ENCODE measurements at regions of chr14 and their contacts with region 1.

Region 1: DNA sequence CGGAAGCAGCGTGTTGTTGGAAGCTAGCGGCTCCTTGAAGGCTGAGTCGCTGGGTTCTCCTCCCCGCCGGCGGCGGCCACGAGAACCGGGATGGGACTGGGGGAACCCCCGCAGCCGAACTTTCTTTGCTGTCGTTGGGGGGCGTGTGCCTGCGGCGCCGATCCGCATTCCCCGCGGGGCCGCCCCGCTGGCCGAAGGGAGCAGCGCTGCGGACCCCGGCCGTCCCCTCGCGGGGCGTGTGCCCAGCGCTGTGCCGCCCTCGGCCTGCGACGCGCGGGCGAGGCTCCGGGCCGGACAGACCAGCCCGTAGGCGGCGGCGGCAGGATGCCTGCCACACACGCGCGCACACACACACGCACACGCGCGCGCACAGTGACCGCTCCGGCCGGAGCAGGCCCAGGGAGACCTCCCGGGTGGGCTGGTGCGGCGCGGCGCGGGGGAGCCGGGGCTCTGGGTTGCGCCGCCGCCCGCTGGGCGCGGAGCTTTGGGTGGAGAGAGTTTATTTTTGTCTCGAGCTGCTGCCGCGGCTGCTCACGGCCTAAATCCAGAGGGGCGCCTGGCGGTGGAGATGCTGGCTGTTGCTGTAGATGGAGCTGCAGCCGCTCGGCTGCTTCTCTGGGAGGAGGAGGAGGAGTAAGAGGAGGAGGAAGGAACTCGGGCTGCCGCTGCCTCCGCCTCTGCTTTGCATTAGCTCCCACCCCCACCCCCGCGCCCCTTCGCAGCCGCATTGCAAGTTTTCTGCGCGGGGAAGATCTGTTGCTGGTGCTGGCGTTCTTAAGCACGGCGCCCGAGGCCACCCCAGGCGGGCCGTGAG is at the start of gene SAMD4A:
- DNase-seq: peak; percentile 63
- H3K27ac ChIP-seq: peak within 1 kb of the TSS; percentile 94
- CTCF ChIP-seq: peak; percentile 35; the same call in 1 of the 2 replicates

Region 2: DNA sequence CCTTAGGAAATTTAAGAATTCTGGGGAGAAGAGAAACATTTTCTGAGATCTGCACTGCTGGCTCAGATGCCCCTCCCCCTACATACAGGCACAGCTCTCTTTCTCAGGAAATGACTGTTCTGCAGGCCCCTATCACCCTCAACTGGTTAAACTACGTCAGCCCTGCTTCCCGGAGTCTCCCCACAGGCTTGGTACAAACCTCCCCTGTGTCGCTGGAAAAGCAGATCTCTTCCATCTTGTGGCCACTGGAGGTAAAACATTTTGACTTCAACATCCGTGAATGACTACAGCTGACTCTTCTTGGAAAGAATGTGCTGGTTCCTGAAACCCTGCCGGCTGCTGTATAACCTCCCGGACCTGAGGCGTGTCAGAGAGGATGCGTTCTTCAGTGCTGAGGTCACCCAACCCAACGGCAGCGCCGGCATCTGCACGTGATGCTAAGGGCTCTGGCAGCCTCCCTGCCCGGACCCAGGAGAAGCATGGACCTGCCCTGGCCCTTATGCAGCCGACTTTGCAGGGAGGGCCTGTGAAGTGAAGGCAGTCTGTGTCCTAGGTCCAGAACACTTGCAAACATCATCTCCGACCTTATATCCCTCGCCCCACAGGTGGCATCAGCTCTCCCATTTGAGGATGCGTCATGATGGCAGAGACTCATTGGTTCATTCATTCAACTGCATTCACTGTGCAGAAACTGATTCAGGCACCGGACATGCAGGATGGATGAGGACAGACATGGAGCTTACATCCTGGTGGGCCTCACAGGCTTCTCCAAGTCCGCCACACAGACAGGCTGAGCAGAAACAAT is 206.8 kb after region 1 on chr14:
- CTCF ChIA-PET with region 1: interaction called, 17 read pairs
- POLR2A ChIA-PET with region 1: no interaction called
- DNase-seq: peak; percentile 99
- H3K27ac ChIP-seq: peak overlapping the region; percentile 86
- CTCF ChIP-seq: peak; percentile 74

Region 3: DNA sequence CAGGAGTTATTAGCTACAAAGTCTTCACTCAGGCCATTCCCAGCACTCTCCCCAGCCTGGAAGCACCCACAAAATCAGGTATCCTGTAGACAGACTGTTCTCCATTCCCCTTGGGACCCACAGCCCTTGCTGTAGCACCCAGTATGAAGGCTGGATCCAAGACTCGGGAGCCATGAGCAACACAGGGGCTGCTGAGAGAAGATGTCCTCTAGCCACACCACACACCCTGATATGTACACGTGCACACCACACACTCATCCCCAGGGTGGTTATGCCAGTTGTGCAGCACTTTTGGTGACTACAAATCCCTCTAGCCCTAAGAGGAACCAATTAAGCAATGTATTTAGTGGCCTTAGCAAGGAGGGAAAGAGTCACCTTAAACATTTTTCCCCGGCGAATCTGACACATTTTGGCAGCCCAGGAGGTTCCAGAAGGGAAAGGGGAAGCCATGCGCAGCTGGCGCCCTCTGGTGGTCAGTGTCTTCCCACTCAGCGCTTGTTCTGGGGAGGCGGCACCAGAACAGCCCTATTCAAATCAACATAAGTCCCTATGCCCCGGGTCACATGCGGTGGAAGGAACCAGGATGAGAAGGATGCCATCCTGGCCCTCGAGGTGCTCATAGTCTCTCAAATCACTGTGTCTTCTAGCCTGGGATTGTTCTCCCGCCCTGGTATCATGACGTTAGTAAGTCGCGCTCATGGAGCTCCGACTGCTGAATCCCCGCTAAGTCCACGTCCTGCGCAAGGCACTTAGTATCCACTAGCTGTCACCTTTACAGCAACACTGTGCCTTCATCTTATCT is 239.1 kb after region 1 on chr14:
- CTCF ChIA-PET with region 1: interaction called, 12 read pairs
- POLR2A ChIA-PET with region 1: no interaction called
- DNase-seq: peak; percentile 81
- H3K27ac ChIP-seq: no peak overlapping the region
- CTCF ChIP-seq: peak; percentile 96